CD8-positive, alpha-beta T cell (primary cell): ENCODE measurements at regions of chr1 and their contacts with region 1.

Region 1: DNA sequence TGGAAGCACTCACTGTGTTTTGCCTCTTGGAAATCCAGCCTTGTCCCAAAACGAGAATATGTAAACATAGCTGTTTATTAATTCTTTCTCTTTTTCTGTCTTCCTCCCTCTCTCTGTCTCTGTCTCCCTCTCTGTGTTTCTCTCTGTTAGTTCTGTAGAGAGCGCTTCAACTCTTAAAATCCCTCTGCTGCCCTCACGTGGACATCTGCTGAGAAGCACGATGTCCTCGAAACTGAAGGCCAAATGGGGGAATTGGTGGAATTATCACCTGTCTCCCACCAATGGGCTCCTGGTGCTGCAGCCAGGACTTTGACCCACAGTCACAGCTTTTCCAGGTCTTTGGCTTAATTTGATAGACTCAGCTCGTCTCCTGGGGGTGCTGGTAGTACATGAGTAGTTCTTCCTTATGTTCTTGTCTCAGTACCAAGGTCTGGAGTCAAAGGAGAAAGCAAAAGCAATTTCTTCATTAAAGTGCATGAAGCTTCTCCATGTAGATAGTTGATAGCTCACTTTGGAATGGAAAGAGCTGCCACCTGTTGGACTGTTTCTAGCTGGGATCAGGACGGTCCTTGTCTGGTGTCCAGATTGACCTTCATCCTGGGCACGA is 5.5 kb upstream of the GBP6 start:
- DNase-seq: peak; percentile 70 to 88 (median 84)
- ATAC-seq: peak; percentile 96
- H3K4me3 ChIP-seq: no peak overlapping the region
- H3K4me3 Mint-ChIP-seq: peak overlapping the region; percentile 8
- H3K27ac ChIP-seq: no peak overlapping the region
- H3K27ac Mint-ChIP-seq: peak overlapping the region; percentile 1
- H3K4me1 ChIP-seq: peaks cover 7% of the 10 kb centered on the region
- H3K4me1 Mint-ChIP-seq: peaks cover 35% of the 10 kb centered on the region
- H3K27me3 ChIP-seq: no peaks in the 10 kb centered on the region
- H3K27me3 Mint-ChIP-seq: no peaks in the 10 kb centered on the region
- CTCF ChIP-seq: peak; percentile 95

Region 2: DNA sequence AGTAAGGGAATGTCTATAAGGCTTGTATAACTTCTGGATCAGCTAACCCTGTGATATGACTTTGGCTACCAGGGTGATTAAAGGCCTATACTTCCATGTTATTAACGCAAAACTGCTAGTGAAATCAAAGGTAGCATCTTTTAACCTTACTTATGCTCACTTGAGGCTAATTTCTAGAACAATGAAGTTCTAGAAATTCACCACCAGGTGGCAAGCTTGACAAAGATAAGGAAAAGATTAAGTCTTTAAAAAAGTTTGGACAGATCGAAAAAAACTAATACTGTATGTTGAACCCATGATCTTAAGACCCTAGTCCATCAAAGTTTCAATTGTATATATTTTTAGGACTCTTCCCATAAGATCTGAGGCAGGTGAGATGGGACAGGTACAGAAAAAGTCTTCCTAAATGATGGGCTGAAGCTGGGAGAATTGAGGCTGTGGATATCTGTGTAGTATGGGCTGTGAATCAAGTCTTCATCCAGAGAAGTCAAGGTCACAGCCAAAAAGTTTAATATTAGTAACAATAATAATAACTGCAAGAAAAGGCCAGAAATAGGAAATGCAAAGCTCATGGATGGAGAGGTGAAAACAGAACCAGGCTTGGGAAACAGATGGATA is 384.8 kb before region 1 on chr1:
- CTCF ChIA-PET with region 1: interaction called, 14 read pairs
- POLR2A ChIA-PET with region 1: no interaction called
- intact Hi-C with region 1: no loop called
- DNase-seq: peak in 2 of 9 experiments; percentile 56 to 66
- ATAC-seq: peak; percentile 52
- H3K4me3 ChIP-seq: no peak overlapping the region
- H3K4me3 Mint-ChIP-seq: no peak overlapping the region
- H3K27ac ChIP-seq: no peak overlapping the region
- H3K27ac Mint-ChIP-seq: no peak overlapping the region
- H3K4me1 ChIP-seq: no peaks in the 10 kb centered on the region
- H3K4me1 Mint-ChIP-seq: peaks cover 17% of the 10 kb centered on the region
- H3K27me3 ChIP-seq: no peaks in the 10 kb centered on the region
- H3K27me3 Mint-ChIP-seq: no peaks in the 10 kb centered on the region
- CTCF ChIP-seq: peak; percentile 75

Region 3: GRCh38 chr1:88998716-88999115 is 359.7 kb before region 1 on chr1:
- CTCF ChIA-PET with region 1: interaction called, 72 read pairs
- POLR2A ChIA-PET with region 1: interaction called, 4 read pairs
- intact Hi-C with region 1: loop called (anchors 1 kb)
- DNase-seq: peak in 3 of 9 experiments; percentile 38 to 84 (median 78)
- ATAC-seq: peak; percentile 89
- H3K4me3 ChIP-seq: no peak overlapping the region
- H3K4me3 Mint-ChIP-seq: no peak overlapping the region
- H3K27ac ChIP-seq: no peak overlapping the region
- H3K27ac Mint-ChIP-seq: no peak overlapping the region
- H3K4me1 ChIP-seq: peaks cover 23% of the 10 kb centered on the region
- H3K4me1 Mint-ChIP-seq: peaks cover 36% of the 10 kb centered on the region
- H3K27me3 ChIP-seq: no peaks in the 10 kb centered on the region
- H3K27me3 Mint-ChIP-seq: no peaks in the 10 kb centered on the region
- CTCF ChIP-seq: peak; percentile 60

Region 4: DNA sequence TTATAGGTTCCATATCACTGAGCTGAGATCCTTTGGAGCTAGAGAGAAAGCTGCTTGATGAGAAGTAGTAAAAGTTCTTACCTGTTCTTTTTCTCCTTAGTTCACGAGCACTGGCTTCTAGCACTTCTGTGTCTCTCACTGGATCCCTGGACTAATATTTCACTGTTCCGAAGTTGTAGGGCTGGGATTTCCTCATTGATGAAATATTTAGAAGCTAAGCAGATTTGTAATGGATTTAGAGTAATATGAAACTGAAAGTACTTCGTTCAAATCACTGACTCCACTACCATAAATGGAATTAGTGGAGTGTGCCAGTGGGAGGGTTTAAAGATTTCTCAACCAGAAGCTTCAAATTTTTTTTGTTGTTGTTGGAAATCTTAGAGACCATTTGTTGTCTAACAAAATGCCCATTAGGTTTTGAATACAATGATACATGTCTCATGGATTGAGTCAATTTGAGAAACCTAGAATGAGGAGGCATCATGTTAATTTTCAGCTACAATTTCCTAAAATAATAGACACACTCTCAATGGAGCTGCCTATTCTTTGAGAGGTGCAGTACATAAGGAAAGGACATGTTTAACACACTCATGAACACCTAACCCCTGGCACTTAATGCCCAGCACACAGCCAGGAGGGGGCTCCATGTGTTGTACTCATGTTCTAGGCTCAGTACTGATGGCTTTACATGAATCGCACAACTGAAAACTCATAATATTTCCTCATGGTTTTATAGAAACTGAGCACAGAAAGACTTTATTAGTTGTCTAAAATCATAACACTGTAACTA is 293.1 kb before region 1 on chr1 and contains the start of gene GBP1:
- CTCF ChIA-PET with region 1: interaction called, 13 read pairs
- POLR2A ChIA-PET with region 1: interaction called, 4 read pairs
- intact Hi-C with region 1: no loop called
- DNase-seq: peak in 2 of 9 experiments; percentile 63 to 78
- ATAC-seq: peak; percentile 85
- H3K4me3 ChIP-seq: peak within 1 kb of the TSS; percentile 60 to 68
- H3K4me3 Mint-ChIP-seq: peak within 1 kb of the TSS; percentile 98
- H3K27ac ChIP-seq: peak within 1 kb of the TSS; percentile 65 to 80
- H3K27ac Mint-ChIP-seq: peak within 1 kb of the TSS; percentile 98
- H3K4me1 ChIP-seq: peaks cover 35% of the 10 kb centered on the region
- H3K4me1 Mint-ChIP-seq: peaks cover 63% of the 10 kb centered on the region
- H3K27me3 ChIP-seq: no peaks in the 10 kb centered on the region
- H3K27me3 Mint-ChIP-seq: no peaks in the 10 kb centered on the region
- CTCF ChIP-seq: no peak
- total RNA-seq, gene GBP1: 20.8 to 25.9 TPM

Region 5: GRCh38 chr1:89125913-89126580 is 232.3 kb before region 1 on chr1 and contains the start of gene GBP2:
- CTCF ChIA-PET with region 1: interaction called, 20 read pairs
- POLR2A ChIA-PET with region 1: no interaction called
- intact Hi-C with region 1: loop called (anchors 1 to 5 kb)
- DNase-seq: peak in 5 of 9 experiments; percentile 24 to 77 (median 44)
- ATAC-seq: peak; percentile 74
- H3K4me3 ChIP-seq: peak within 1 kb of the TSS; percentile 59 to 75
- H3K4me3 Mint-ChIP-seq: peak within 1 kb of the TSS; percentile 97
- H3K27ac ChIP-seq: peak within 1 kb of the TSS; percentile 59 to 78
- H3K27ac Mint-ChIP-seq: peak within 1 kb of the TSS; percentile 99
- H3K4me1 ChIP-seq: peaks cover 39% of the 10 kb centered on the region
- H3K4me1 Mint-ChIP-seq: peaks cover 66% of the 10 kb centered on the region
- H3K27me3 ChIP-seq: no peaks in the 10 kb centered on the region
- H3K27me3 Mint-ChIP-seq: no peaks in the 10 kb centered on the region
- CTCF ChIP-seq: no peak
- total RNA-seq, gene GBP2: 120 to 125 TPM

Region 6: DNA sequence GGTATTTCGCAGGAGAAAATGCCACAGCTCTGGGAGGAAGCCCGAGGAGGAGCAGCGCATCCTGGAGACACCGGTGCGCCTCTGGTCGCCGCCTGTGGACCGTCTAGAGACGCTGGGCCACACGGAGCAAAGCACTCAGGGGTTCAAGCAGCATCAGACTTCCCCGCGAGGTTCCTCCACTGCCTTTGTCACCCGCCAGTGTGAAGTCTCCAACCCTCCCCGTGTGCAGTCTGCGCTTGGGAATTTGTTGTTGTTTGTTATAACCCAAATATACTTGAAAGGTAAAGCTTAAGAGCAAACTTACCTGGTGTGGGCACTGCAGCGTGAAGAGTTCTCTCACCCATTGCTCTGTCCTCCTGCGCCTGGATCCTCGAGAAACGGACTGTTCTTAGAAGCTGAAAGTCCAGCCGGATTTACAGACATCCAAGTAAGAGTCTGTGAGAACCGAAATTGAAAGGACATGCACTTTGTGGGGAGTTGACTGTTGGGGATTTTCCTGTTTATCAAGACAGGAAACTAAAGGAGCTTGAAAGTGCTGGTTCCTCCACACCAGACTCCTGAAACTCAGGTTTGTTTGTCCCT is 159.8 kb before region 1 on chr1 and contains the start of gene GBP4:
- CTCF ChIA-PET with region 1: interaction called, 19 read pairs
- POLR2A ChIA-PET with region 1: interaction called, 3 read pairs
- intact Hi-C with region 1: loop called (anchors 1 to 2 kb)
- DNase-seq: peak in 8 of 9 experiments; percentile 31 to 84 (median 55)
- ATAC-seq: peak; percentile 50
- H3K4me3 ChIP-seq: peak within 1 kb of the TSS; percentile 70 to 87
- H3K4me3 Mint-ChIP-seq: peak within 1 kb of the TSS; percentile 95
- H3K27ac ChIP-seq: peak within 1 kb of the TSS; percentile 80 to 86
- H3K27ac Mint-ChIP-seq: peak within 1 kb of the TSS; percentile 93
- H3K4me1 ChIP-seq: peaks cover 57% of the 10 kb centered on the region
- H3K4me1 Mint-ChIP-seq: peaks cover 68% of the 10 kb centered on the region
- H3K27me3 ChIP-seq: no peaks in the 10 kb centered on the region
- H3K27me3 Mint-ChIP-seq: no peaks in the 10 kb centered on the region
- CTCF ChIP-seq: no peak
- total RNA-seq, gene GBP4: 16.6 to 17.5 TPM

Region 7: GRCh38 chr1:89298461-89298860 is 59.9 kb before region 1 on chr1:
- CTCF ChIA-PET with region 1: interaction called, 10 read pairs
- POLR2A ChIA-PET with region 1: no interaction called
- intact Hi-C with region 1: no loop called
- DNase-seq: no peak
- ATAC-seq: no peak
- H3K4me3 ChIP-seq: no peak overlapping the region
- H3K4me3 Mint-ChIP-seq: no peak overlapping the region
- H3K27ac ChIP-seq: no peak overlapping the region
- H3K27ac Mint-ChIP-seq: no peak overlapping the region
- H3K4me1 ChIP-seq: peaks cover 20% of the 10 kb centered on the region
- H3K4me1 Mint-ChIP-seq: peaks cover 36% of the 10 kb centered on the region
- H3K27me3 ChIP-seq: no peaks in the 10 kb centered on the region
- H3K27me3 Mint-ChIP-seq: no peaks in the 10 kb centered on the region
- CTCF ChIP-seq: no peak

Region 8: DNA sequence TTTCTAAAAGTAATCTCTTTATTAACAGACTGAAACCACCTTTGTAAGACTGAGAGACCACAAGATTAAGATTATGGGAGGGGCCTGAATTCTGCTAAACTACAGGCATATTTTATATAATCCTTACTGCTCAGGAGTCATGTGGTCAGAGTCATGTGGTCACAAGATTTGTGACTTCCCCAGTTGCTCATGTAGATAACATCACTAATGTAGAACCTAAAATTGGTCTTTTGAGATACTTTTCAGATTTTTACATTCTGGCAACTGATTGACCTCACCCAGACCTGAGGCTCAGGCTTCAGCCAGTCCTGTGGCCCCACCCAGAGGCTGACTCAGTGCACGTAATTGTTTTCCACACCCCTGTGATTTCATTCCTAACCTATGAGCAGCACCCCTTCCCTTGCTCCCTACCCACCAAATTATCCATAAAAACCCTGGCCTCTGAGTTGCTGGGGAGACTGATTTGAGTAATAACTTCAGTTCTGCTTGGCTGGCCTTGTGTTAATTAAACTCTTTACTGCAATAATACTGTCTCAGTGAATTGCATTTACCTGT is 594.8 kb after region 1 on chr1:
- CTCF ChIA-PET with region 1: no interaction called
- POLR2A ChIA-PET with region 1: no interaction called
- intact Hi-C with region 1: no loop called
- DNase-seq: peak in 7 of 9 experiments; percentile 10 to 52 (median 31)
- ATAC-seq: no peak
- H3K4me3 ChIP-seq: no peak overlapping the region
- H3K4me3 Mint-ChIP-seq: no peak overlapping the region
- H3K27ac ChIP-seq: no peak overlapping the region
- H3K27ac Mint-ChIP-seq: no peak overlapping the region
- H3K4me1 ChIP-seq: peaks cover 8% of the 10 kb centered on the region
- H3K4me1 Mint-ChIP-seq: peaks cover 24% of the 10 kb centered on the region
- H3K27me3 ChIP-seq: no peaks in the 10 kb centered on the region
- H3K27me3 Mint-ChIP-seq: no peaks in the 10 kb centered on the region
- CTCF ChIP-seq: no peak

Region 9: DNA sequence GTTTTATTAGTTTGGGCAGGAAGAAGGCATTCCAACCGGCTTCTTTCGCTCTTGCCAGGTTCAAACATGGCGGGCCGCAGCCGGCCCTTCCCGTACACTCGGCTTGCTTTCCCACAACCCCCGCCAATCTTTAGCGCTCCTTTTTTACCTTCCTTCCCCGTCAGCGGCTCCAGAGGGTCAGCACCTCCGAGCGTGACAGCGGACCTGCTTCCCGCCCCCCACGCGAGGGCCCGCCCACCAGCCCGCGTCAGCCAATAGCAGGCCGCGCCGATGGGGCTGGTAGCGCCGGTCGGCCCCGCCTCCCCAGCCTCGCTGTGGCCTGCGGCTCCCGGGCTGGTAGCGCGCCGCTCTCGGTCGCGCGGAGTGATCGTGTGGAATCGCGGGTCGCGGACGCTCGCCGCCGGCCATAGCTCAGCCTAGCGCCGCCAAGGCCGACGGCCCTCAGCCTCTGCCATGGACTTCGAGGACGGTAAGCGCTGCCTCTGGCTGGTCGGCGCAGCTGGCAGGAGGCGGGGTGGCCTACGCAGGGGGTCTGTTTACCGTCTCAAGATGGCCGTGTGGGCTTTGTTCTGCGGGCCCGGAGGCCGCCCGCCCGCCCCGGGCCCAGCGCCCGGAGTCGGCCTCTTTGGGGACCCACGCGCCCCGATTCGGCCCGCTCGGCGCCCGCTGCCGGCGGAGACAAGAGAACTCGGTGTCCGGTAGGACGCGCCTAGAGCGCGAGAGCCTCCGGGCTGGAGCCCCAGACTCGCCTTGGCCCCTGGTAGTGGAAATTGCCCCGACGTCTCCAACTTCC is 636.6 kb after region 1 on chr1 and contains the start of gene ZNF326:
- CTCF ChIA-PET with region 1: no interaction called
- POLR2A ChIA-PET with region 1: no interaction called
- intact Hi-C with region 1: no loop called
- DNase-seq: peak; percentile 89 to 96 (median 93)
- ATAC-seq: peak; percentile 97
- H3K4me3 ChIP-seq: peak within 1 kb of the TSS; percentile 72 to 93
- H3K4me3 Mint-ChIP-seq: peak within 1 kb of the TSS; percentile 99
- H3K27ac ChIP-seq: peak within 1 kb of the TSS; percentile 78 to 82
- H3K27ac Mint-ChIP-seq: peak within 1 kb of the TSS; percentile 96
- H3K4me1 ChIP-seq: peaks cover 25% of the 10 kb centered on the region
- H3K4me1 Mint-ChIP-seq: peaks cover 35% of the 10 kb centered on the region
- H3K27me3 ChIP-seq: no peaks in the 10 kb centered on the region
- H3K27me3 Mint-ChIP-seq: no peaks in the 10 kb centered on the region
- CTCF ChIP-seq: no peak
- total RNA-seq, gene ZNF326: 55.5 to 59.1 TPM